ENCODE measurements at regions of chr1 and their contacts with region 1.

Region 1: GRCh38 chr1:1115786-1116700 is at the start of gene C1orf159:
- DNase-seq: peak; percentile 97
- H3K4me3 Mint-ChIP-seq: peak within 1 kb of the TSS; percentile 82
- H3K27ac Mint-ChIP-seq: peak within 1 kb of the TSS; percentile 78
- H3K4me1 Mint-ChIP-seq: peaks cover 8% of the 10 kb centered on the region
- H3K27me3 Mint-ChIP-seq: peaks cover 12% of the 10 kb centered on the region
- total RNA-seq, gene C1orf159: 20.5 and 22.1 TPM in 2 replicates

Region 2: DNA sequence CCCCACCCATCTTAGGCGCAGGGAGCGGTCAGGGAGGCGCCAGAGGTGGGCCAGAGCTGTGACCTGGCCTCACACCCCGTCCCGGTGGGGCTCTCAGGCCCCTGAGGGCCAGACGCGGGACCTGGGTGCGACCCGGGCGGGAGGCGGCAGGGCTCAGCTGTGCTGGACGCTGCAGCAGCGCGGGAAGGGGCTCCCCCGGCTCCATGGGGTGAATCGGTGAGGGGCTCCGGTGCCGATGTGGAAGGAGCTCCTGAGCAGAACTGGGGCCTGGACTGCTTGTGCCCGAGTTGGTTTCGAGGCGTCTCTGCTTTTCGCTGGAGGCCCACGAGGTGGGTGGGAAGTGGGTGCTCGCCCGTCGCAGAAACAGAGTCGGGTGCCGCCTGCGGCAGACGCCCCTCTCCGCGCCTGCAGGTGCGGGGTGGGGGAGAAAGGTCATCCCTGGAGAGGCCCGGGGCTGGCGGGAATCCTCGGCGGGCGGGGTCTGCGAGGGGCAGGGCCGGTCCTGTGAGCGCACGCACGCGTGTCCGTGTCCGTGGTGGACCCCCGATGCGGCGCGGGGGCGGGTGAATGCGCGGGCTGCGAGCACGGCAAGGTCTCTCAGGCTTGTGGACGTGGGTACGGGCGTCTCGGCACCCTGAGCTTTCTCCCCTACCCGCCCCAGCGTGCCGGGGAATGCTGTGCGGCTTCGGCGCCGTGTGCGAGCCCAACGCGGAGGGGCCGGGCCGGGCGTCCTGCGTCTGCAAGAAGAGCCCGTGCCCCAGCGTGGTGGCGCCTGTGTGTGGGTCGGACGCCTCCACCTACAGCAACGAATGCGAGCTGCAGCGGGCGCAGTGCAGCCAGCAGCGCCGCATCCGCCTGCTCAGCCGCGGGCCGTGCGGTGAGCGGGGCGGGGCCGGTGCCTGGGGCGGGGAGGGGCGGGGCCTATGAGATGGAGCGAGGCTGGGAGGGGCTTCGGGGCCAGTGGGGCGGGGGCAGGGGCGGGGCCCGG is 75.7 kb before region 1 on chr1:
- intact Hi-C with region 1: loop called (anchors 2 kb)
- DNase-seq: peak; percentile 79
- H3K4me3 Mint-ChIP-seq: peak overlapping the region; percentile 63
- H3K27ac Mint-ChIP-seq: peak overlapping the region; percentile 2
- H3K4me1 Mint-ChIP-seq: peaks cover 11% of the 10 kb centered on the region
- H3K27me3 Mint-ChIP-seq: peaks cover 21% of the 10 kb centered on the region

Region 3: DNA sequence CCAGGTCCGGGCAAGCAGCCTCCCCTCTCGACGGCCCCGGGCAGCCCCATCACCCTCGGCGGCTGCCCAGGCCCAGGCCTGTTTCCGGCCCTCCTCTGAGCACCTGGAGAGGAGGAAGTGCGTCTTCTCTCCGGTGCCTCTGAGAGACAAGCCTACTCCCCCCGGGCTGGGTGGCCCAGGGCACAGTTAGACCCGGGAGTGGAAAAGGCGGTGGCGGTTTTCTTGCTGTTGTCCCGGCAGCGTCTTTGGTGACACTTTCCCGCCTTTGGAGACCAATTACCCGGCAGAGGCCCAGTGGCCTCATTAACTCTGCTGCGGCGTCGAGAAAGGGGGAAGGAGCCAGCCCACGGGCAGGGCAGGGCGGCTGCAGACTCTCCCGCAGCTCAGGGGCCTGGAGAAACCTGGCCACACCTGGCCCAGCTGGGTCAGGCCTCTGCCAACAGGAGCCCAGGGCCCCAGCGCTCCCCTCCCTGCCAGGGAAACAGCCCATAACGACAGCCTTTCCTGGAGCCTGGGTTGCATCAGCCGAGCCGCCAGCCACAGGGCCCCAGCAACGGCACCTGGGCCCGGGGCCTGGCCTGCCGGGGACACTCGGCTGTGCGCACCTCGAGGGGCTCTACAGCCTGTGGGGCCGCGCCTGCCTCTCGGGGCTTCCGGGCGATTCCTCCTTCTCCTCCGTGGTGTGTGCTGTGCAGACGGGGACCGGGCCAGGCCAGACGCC is 28.2 kb after region 1 on chr1:
- intact Hi-C with region 1: no loop called
- DNase-seq: peak; percentile 61
- H3K4me3 Mint-ChIP-seq: no peak overlapping the region
- H3K27ac Mint-ChIP-seq: peak overlapping the region; percentile 96
- H3K4me1 Mint-ChIP-seq: peaks cover 12% of the 10 kb centered on the region
- H3K27me3 Mint-ChIP-seq: no peaks in the 10 kb centered on the region

Region 4: GRCh38 chr1:1206376-1207260 is 90.6 kb after region 1 on chr1 and contains the start of gene TNFRSF18:
- intact Hi-C with region 1: loop called (anchors 2 kb)
- DNase-seq: no peak
- H3K4me3 Mint-ChIP-seq: peak within 1 kb of the TSS; percentile 82
- H3K27ac Mint-ChIP-seq: peak within 1 kb of the TSS; percentile 68
- H3K4me1 Mint-ChIP-seq: peaks cover 19% of the 10 kb centered on the region
- H3K27me3 Mint-ChIP-seq: no peaks in the 10 kb centered on the region
- total RNA-seq, gene TNFRSF18: 219 and 231 TPM in 2 replicates

Region 5: GRCh38 chr1:1273512-1274298 is 157.7 kb after region 1 on chr1 and contains the start of gene UBE2J2:
- intact Hi-C with region 1: loop called (anchors 10 kb)
- DNase-seq: peak; percentile 87
- H3K4me3 Mint-ChIP-seq: peak within 1 kb of the TSS; percentile 81
- H3K27ac Mint-ChIP-seq: peak within 1 kb of the TSS; percentile 69
- H3K4me1 Mint-ChIP-seq: peaks cover 29% of the 10 kb centered on the region
- H3K27me3 Mint-ChIP-seq: no peaks in the 10 kb centered on the region
- total RNA-seq, gene UBE2J2: 79.3 and 81.0 TPM in 2 replicates

Region 6: DNA sequence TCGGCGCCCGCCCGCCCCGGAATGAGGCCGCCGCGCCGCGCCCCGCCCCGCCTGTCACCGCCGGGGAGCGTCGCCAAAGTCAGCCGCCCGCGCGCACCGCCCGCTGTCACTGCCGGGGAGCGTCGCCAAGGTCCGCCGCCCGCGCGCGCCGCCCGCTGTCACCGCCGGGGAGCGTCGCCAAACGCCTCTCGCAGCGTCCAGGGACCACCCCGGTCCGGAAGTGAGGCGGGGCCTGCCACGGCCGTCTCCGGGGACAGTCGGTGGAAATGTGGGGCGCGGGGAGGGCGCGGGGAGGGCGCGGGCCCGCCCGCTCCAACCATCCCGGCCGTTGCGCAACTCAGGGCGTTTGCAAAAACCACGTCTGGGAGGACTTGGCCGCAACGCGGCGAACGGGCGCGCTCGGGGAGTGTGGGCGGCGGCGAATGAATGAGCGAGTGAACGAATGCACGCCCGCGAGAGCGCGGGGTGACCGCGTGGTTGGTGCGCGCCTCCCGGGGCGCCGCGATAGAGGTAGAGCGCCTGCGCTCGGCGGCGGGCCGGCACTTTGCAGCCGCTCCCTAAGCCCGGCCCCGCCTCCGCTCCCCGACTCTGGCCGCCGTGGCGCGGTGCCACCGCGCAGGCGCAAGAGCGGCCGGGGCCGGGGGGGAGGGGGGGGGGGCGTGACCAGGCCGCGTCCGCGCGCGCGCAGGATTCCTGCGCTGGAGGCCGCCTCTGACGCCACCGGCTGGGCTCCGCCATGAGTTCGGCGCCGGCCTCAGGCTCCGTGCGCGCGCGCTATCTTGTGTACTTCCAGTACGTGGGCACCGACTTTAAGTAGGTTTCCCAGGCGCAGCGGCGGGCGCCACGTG is 192.1 kb after region 1 on chr1 and contains the starts of genes ACAP3 and PUSL1:
- intact Hi-C with region 1: loop called (anchors 5 kb)
- DNase-seq: peak; percentile 89
- H3K4me3 Mint-ChIP-seq: peak within 1 kb of the TSS; percentile 85
- H3K27ac Mint-ChIP-seq: peak within 1 kb of the TSS; percentile 79
- H3K4me1 Mint-ChIP-seq: peaks cover 10% of the 10 kb centered on the region
- H3K27me3 Mint-ChIP-seq: no peaks in the 10 kb centered on the region
- total RNA-seq, gene ACAP3: 43.4 and 50.1 TPM in 2 replicates
- total RNA-seq, gene PUSL1: 31.6 and 31.8 TPM in 2 replicates